HCT116 (cell line): ENCODE measurements at regions of chr9 and their contacts with region 1.

Region 1: GRCh38 chr9:134778841-134779411 is 101.7 kb upstream of the FCN2 start:
- DNase-seq: peak; percentile 33
- ATAC-seq: peak; percentile 96
- H3K4me3 ChIP-seq: no peak overlapping the region
- H3K27ac ChIP-seq: no peak overlapping the region
- H3K4me1 ChIP-seq: peaks cover 3 to 5% of the 10 kb centered on the region in 2 experiments; a peak in 2 of 4 replicates
- H3K27me3 ChIP-seq: 0 out of 2 replicates have a peak, but pooled peaks cover 7% of the 10 kb centered on the region
- CTCF ChIP-seq: peak; percentile 72 to 87 (median 77)
- POLR2A ChIP-seq: no peak
- RAD21 ChIP-seq: peak; percentile 73

Region 2: GRCh38 chr9:134835448-134835847 is 56.5 kb after region 1 on chr9:
- CTCF ChIA-PET with region 1: no interaction called
- POLR2A ChIA-PET with region 1: no interaction called
- RAD21 ChIA-PET with region 1: no interaction called
- intact Hi-C with region 1: no loop called
- DNase-seq: no peak
- ATAC-seq: no peak
- H3K4me3 ChIP-seq: no peak overlapping the region
- H3K27ac ChIP-seq: no peak overlapping the region
- H3K4me1 ChIP-seq: peaks cover 0 to 7% of the 10 kb centered on the region in 2 experiments; a peak in 2 of 4 replicates
- H3K27me3 ChIP-seq: no peaks in the 10 kb centered on the region
- CTCF ChIP-seq: no peak
- POLR2A ChIP-seq: no peak
- RAD21 ChIP-seq: no peak

Region 3: GRCh38 chr9:134983074-134983473 is 204.1 kb after region 1 on chr9:
- CTCF ChIA-PET with region 1: interaction called, 7 read pairs
- POLR2A ChIA-PET with region 1: no interaction called
- RAD21 ChIA-PET with region 1: no interaction called
- intact Hi-C with region 1: loop called (anchors 1 kb)
- DNase-seq: no peak
- ATAC-seq: peak; percentile 49; the same call in 1 of the 2 replicates
- H3K4me3 ChIP-seq: no peak overlapping the region
- H3K27ac ChIP-seq: no peak overlapping the region
- H3K4me1 ChIP-seq: no peaks in the 10 kb centered on the region
- H3K27me3 ChIP-seq: peaks cover 5% of the 10 kb centered on the region; the same call in 1 of the 2 replicates
- CTCF ChIP-seq: peak; percentile 27 to 43 (median 37); a peak in 3 of 6 replicates
- POLR2A ChIP-seq: no peak
- RAD21 ChIP-seq: peak; percentile 59

Region 4: GRCh38 chr9:135080286-135081263 is 301.6 kb after region 1 on chr9:
- CTCF ChIA-PET with region 1: no interaction called
- POLR2A ChIA-PET with region 1: no interaction called
- RAD21 ChIA-PET with region 1: no interaction called
- intact Hi-C with region 1: loop called (anchors 5 kb)
- DNase-seq: no peak
- ATAC-seq: no peak
- H3K4me3 ChIP-seq: no peak overlapping the region
- H3K27ac ChIP-seq: no peak overlapping the region
- H3K4me1 ChIP-seq: no peaks in the 10 kb centered on the region
- H3K27me3 ChIP-seq: peaks cover 34% of the 10 kb centered on the region; the same call in 1 of the 2 replicates
- CTCF ChIP-seq: no peak
- POLR2A ChIP-seq: no peak
- RAD21 ChIP-seq: no peak

Region 5: DNA sequence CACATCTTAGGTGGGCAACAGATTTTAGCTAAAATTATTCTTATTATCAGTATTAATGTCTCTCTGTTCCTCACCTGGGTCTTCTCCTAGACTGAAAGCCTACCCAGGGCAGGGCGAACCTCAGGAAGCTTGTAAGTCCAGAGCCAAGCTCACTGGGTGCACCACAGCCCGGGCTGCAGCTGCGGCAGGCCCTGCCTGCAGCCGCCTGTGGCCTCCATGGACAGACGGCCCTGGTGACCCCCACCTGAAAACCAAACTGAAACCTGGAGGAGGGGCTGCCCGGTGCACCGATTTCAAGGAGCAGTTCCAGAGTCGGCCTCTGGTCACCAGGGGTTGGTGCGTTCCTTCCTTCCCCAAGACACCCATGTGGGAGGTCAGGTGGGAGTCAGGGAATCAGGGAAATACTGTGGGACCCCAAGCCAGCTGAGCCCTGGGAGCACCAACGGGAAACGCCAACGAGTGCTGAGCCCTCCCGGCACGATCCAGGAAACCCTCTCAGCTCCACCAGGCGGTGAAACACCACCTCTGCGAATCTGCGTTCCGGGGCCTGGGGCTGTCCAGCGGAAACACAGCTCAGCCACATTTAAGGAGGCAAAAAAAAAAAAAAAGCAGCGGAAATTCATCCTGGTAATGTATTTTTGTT is 632.0 kb after region 1 on chr9:
- CTCF ChIA-PET with region 1: no interaction called
- POLR2A ChIA-PET with region 1: no interaction called
- RAD21 ChIA-PET with region 1: no interaction called
- intact Hi-C with region 1: loop called (anchors 5 kb)
- DNase-seq: no peak
- ATAC-seq: no peak
- H3K4me3 ChIP-seq: no peak overlapping the region
- H3K27ac ChIP-seq: no peak overlapping the region
- H3K4me1 ChIP-seq: peaks cover 3 to 4% of the 10 kb centered on the region in 2 experiments; a peak in 2 of 4 replicates
- H3K27me3 ChIP-seq: peaks cover 14% of the 10 kb centered on the region; the same call in 1 of the 2 replicates
- CTCF ChIP-seq: no peak
- POLR2A ChIP-seq: no peak
- RAD21 ChIP-seq: no peak